K562 (cell line): ENCODE measurements at regions of chr6 and their contacts with region 1.

Region 1: GRCh38 chr6:99467509-99468106 is 42.5 kb upstream of the PNISR start:
- DNase-seq: peak; percentile 23 to 44 (median 26)
- ATAC-seq: peak; percentile 67
- H3K4me3 ChIP-seq: no peak overlapping the region
- H3K27ac ChIP-seq: no peak overlapping the region
- H3K4me1 ChIP-seq: no peaks in the 10 kb centered on the region
- H3K27me3 ChIP-seq: no peaks in the 10 kb centered on the region
- CTCF ChIP-seq: peak; percentile 40 to 78 (median 49); a peak in 3 of 6 replicates
- EP300 ChIP-seq: no peak
- POLR2A ChIP-seq: no peak
- RAD21 ChIP-seq: peak; percentile 83 to 86

Region 2: GRCh38 chr6:99736302-99736701 is 268.7 kb after region 1 on chr6:
- CTCF ChIA-PET with region 1: interaction called, 4 read pairs
- POLR2A ChIA-PET with region 1: no interaction called
- in situ Hi-C with region 1: loop called (anchors 5 kb)
- intact Hi-C with region 1: loop called (anchors 2 kb)
- DNase-seq: peak in 1 of 4 experiments; percentile 9
- ATAC-seq: peak; percentile 74
- H3K4me3 ChIP-seq: no peak overlapping the region
- H3K27ac ChIP-seq: no peak overlapping the region
- H3K4me1 ChIP-seq: no peaks in the 10 kb centered on the region
- H3K27me3 ChIP-seq: no peaks in the 10 kb centered on the region
- CTCF ChIP-seq: peak; percentile 12 to 26 (median 14); a peak in 3 of 6 replicates
- EP300 ChIP-seq: no peak
- POLR2A ChIP-seq: no peak
- RAD21 ChIP-seq: peak; percentile 35 to 36; a peak in 3 of 4 replicates

Region 3: GRCh38 chr6:99746261-99746895 is 278.8 kb after region 1 on chr6:
- CTCF ChIA-PET with region 1: interaction called, 17 read pairs
- POLR2A ChIA-PET with region 1: no interaction called
- in situ Hi-C with region 1: no loop called
- intact Hi-C with region 1: loop called (anchors 1 kb)
- DNase-seq: peak; percentile 38 to 74 (median 41)
- ATAC-seq: peak; percentile 93
- H3K4me3 ChIP-seq: no peak overlapping the region
- H3K27ac ChIP-seq: no peak overlapping the region
- H3K4me1 ChIP-seq: no peaks in the 10 kb centered on the region
- H3K27me3 ChIP-seq: no peaks in the 10 kb centered on the region
- CTCF ChIP-seq: peak; percentile 68 to 81 (median 80)
- EP300 ChIP-seq: no peak
- POLR2A ChIP-seq: no peak
- RAD21 ChIP-seq: peak; percentile 83 to 86

Region 4: GRCh38 chr6:99790679-99791078 is 323.1 kb after region 1 on chr6:
- CTCF ChIA-PET with region 1: interaction called, 4 read pairs
- POLR2A ChIA-PET with region 1: no interaction called
- in situ Hi-C with region 1: no loop called
- intact Hi-C with region 1: loop called (anchors 5 kb)
- DNase-seq: no peak
- ATAC-seq: no peak
- H3K4me3 ChIP-seq: no peak overlapping the region
- H3K27ac ChIP-seq: no peak overlapping the region
- H3K4me1 ChIP-seq: no peaks in the 10 kb centered on the region
- H3K27me3 ChIP-seq: peaks cover 0 to 6% of the 10 kb centered on the region in 2 experiments; a peak in 1 of 5 replicates
- CTCF ChIP-seq: peak in 1 of 3 experiments; percentile 32; a peak in 3 of 6 replicates
- EP300 ChIP-seq: no peak
- POLR2A ChIP-seq: no peak
- RAD21 ChIP-seq: peak in 1 of 2 experiments; percentile 29; a peak in 2 of 4 replicates

Region 5: DNA sequence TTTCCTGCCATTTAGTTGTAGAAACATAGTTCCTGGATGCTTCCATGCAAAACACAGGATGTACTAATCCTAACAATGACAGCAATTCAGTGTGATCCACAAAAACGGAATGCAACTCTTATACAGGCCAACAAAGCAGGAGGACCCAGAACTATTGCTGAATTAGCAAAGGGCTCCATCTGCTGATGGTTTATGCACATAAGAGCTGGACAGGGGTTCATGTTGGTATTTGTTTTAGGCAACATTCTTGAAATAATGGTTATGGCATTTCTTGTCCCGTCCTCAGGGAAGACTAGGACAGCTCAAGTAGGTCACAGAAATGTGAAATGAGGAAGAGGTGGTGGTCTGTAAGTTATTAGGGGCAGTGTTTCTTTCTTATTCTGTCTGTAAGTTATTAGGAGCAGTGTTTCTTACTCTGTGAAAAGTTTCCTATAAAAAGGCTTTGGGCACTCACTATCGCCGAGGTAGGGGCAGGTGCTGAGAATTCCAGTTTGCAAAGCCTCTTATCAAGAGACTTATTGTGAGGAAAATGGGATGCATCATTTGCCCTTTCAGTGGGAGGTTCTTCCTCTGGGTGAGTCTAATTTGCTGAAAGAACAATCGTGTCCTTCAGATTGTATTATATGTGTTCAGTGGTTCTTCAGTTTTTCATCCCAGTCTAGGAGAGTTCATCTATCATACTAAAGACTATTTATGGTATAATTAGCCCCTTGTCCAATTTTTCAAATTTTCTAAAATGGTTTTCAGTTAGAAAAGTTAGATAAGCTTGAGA is 355.3 kb after region 1 on chr6:
- CTCF ChIA-PET with region 1: interaction called, 7 read pairs
- POLR2A ChIA-PET with region 1: no interaction called
- in situ Hi-C with region 1: no loop called
- intact Hi-C with region 1: loop called (anchors 2 kb)
- DNase-seq: peak; percentile 25 to 59 (median 36)
- ATAC-seq: peak; percentile 99
- H3K4me3 ChIP-seq: no peak overlapping the region
- H3K27ac ChIP-seq: no peak overlapping the region
- H3K4me1 ChIP-seq: no peaks in the 10 kb centered on the region; a peak in 1 of 5 replicates
- H3K27me3 ChIP-seq: peaks cover 0 to 4% of the 10 kb centered on the region in 2 experiments; a peak in 4 of 5 replicates
- CTCF ChIP-seq: peak; percentile 57 to 69 (median 69)
- EP300 ChIP-seq: no peak
- POLR2A ChIP-seq: no peak
- RAD21 ChIP-seq: peak; percentile 67 to 77